Common myeloid progenitor, CD34-positive (primary cell): ENCODE measurements at regions of chr10 and their contacts with region 1.

Region 1: GRCh38 chr10:96719850-96720421 is 378 bp downstream of the PIK3AP1 start:
- DNase-seq: peak; percentile 74 to 83 (median 80)
- H3K4me3 ChIP-seq: peak overlapping the region; percentile 74 to 93 (median 83)
- H3K27ac ChIP-seq: peak overlapping the region; percentile 9 to 76
- H3K4me1 ChIP-seq: peaks cover 21 to 48% (median 35%) of the 10 kb centered on the region in 4 experiments
- H3K27me3 ChIP-seq: no peaks in the 10 kb centered on the region

Region 2: GRCh38 chr10:96651998-96652431 is 67.9 kb before region 1 on chr10:
- CTCF ChIA-PET with region 1: interaction called, 11 read pairs
- POLR2A ChIA-PET with region 1: interaction called, 3 read pairs
- DNase-seq: peak; percentile 90 to 97 (median 96)
- H3K4me3 ChIP-seq: peak overlapping the region in 2 of 7 experiments; percentile 6 to 38
- H3K27ac ChIP-seq: peak overlapping the region in 1 of 2 experiments; percentile 40
- H3K4me1 ChIP-seq: peaks cover 14 to 67% (median 40%) of the 10 kb centered on the region in 4 experiments
- H3K27me3 ChIP-seq: no peaks in the 10 kb centered on the region

Region 3: DNA sequence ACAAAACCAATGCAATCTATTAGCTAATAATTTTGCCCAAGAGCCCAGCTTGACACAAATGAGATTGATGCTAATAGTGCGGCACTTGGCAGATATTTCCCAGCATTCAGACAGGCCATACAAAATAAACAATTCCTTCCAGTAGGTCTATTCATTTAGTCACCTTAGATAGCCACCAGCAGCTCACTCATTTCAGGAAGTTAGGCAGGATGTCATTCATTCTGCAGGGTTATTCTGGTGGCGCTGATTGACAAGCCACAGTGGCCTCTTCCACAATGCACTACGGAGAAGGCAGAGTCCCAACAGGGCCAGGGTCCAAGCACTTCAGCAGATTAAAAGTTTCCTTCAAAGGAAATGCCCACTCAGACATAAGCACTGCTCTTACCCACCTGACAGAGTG is 55.4 kb before region 1 on chr10:
- CTCF ChIA-PET with region 1: interaction called, 11 read pairs
- POLR2A ChIA-PET with region 1: no interaction called
- DNase-seq: peak in 2 of 3 donors; percentile 68 to 80
- H3K4me3 ChIP-seq: no peak overlapping the region
- H3K27ac ChIP-seq: no peak overlapping the region
- H3K4me1 ChIP-seq: peaks cover 15 to 48% (median 24%) of the 10 kb centered on the region in 4 experiments
- H3K27me3 ChIP-seq: no peaks in the 10 kb centered on the region

Region 4: DNA sequence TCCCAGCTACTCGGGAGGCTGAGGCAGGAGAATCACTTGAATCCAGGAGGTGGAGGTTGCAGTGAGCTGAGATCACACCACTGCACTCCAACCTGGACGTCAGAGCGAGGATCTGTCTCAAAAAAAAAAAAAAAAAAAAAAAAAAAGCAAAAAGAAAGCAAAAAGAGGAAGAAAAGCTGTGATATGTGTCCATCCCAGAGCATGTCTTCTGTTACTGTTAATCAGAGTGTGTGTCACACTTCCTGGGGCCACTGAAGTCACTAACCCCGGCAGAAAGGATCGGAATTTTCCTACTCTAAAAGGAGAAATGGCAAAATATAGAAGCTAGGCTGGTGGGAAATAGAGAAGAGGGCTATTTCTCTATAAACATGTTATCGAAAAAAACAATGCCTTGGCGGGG is 11.5 kb before region 1 on chr10:
- CTCF ChIA-PET with region 1: interaction called, 17 read pairs
- POLR2A ChIA-PET with region 1: no interaction called
- DNase-seq: peak in 2 of 3 donors; percentile 82 to 84
- H3K4me3 ChIP-seq: no peak overlapping the region
- H3K27ac ChIP-seq: peak overlapping the region in 1 of 2 experiments; percentile 61
- H3K4me1 ChIP-seq: peaks cover 10 to 45% (median 24%) of the 10 kb centered on the region in 4 experiments
- H3K27me3 ChIP-seq: no peaks in the 10 kb centered on the region

Region 5: DNA sequence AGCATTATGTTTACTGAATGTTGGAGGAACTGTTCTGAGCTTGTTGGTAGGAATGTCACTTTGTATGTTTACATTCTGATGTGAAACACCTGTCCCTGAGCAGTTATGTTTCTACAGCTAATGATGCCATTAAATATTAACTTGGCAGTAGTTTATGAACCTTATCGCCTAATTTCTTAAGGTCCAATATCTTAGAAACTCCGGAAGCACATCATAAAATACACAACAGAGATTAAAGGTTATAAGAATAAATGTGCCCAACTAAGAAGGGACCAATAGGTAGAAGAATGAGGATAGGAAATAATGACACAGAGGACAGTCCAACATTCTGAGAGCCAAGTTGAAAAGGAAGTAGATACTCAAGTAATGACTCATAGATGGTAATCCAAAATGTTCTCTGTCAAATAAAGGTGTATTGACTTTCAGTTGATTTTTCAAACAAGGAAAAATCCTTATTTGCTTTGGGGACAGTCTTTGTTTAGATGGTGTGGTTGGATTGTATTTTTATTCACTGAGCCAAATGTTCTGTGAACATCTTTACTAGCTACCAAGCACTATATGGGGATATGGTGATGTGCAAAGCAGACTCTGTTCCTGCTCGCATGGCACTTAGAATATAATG is 144.1 kb after region 1 on chr10:
- CTCF ChIA-PET with region 1: no interaction called
- POLR2A ChIA-PET with region 1: no interaction called
- DNase-seq: peak in 2 of 3 donors; percentile 42 to 60
- H3K4me3 ChIP-seq: no peak overlapping the region
- H3K27ac ChIP-seq: no peak overlapping the region
- H3K4me1 ChIP-seq: peaks cover 0 to 7% (median 3%) of the 10 kb centered on the region in 4 experiments
- H3K27me3 ChIP-seq: no peaks in the 10 kb centered on the region